B cell (primary cell): ENCODE measurements at regions of chr10 and their contacts with region 1.

Region 1: GRCh38 chr10:35195361-35196306 is 69.0 kb downstream of the CREM start:
- DNase-seq: peak; percentile 96
- ATAC-seq: peak; percentile 87
- H3K4me3 ChIP-seq: peak overlapping the region; percentile 38 to 68 (median 60)
- H3K4me3 Mint-ChIP-seq: peak overlapping the region; percentile 93
- H3K27ac ChIP-seq: peak overlapping the region; percentile 94 to 98
- H3K27ac Mint-ChIP-seq: peak overlapping the region; percentile 98
- H3K4me1 ChIP-seq: peaks cover 7 to 12% of the 10 kb centered on the region in 2 donors
- H3K4me1 Mint-ChIP-seq: peaks cover 32% of the 10 kb centered on the region
- H3K27me3 ChIP-seq: no peaks in the 10 kb centered on the region
- H3K27me3 Mint-ChIP-seq: no peaks in the 10 kb centered on the region
- CTCF ChIP-seq: peak; percentile 83

Region 2: GRCh38 chr10:35090162-35090954 is 105.3 kb before region 1 on chr10 and contains the start of gene CUL2:
- CTCF ChIA-PET with region 1: interaction called, 11 read pairs
- POLR2A ChIA-PET with region 1: interaction called, 4 read pairs
- intact Hi-C with region 1: loop called (anchors 1 kb)
- DNase-seq: peak; percentile 98
- ATAC-seq: peak; percentile 95
- H3K4me3 ChIP-seq: peak within 1 kb of the TSS; percentile 62 to 92 (median 80)
- H3K4me3 Mint-ChIP-seq: peak within 1 kb of the TSS; percentile 89
- H3K27ac ChIP-seq: peak within 1 kb of the TSS; percentile 95 to 98
- H3K27ac Mint-ChIP-seq: peak within 1 kb of the TSS; percentile 95
- H3K4me1 ChIP-seq: peaks cover 29 to 31% of the 10 kb centered on the region in 2 donors
- H3K4me1 Mint-ChIP-seq: peaks cover 50% of the 10 kb centered on the region
- H3K27me3 ChIP-seq: no peaks in the 10 kb centered on the region
- H3K27me3 Mint-ChIP-seq: no peaks in the 10 kb centered on the region
- CTCF ChIP-seq: no peak
- total RNA-seq, gene CUL2: 36.9 and 41.9 TPM in 2 replicates

Region 3: GRCh38 chr10:35126530-35127296 is 68.9 kb before region 1 on chr10 and contains the start of gene CREM:
- CTCF ChIA-PET with region 1: interaction called, 156 read pairs
- POLR2A ChIA-PET with region 1: interaction called, 42 read pairs
- intact Hi-C with region 1: loop called (anchors 1 kb)
- DNase-seq: peak; percentile 99
- ATAC-seq: peak; percentile 84
- H3K4me3 ChIP-seq: peak within 1 kb of the TSS; percentile 43 to 99 (median 93)
- H3K4me3 Mint-ChIP-seq: peak within 1 kb of the TSS; percentile 81
- H3K27ac ChIP-seq: peak within 1 kb of the TSS; percentile 94 to 100
- H3K27ac Mint-ChIP-seq: peak within 1 kb of the TSS; percentile 100
- H3K4me1 ChIP-seq: peaks cover 8 to 17% of the 10 kb centered on the region in 2 donors
- H3K4me1 Mint-ChIP-seq: peaks cover 37% of the 10 kb centered on the region
- H3K27me3 ChIP-seq: no peaks in the 10 kb centered on the region
- H3K27me3 Mint-ChIP-seq: no peaks in the 10 kb centered on the region
- CTCF ChIP-seq: peak; percentile 80
- total RNA-seq, gene CREM: 94.6 and 97.4 TPM in 2 replicates

Region 4: GRCh38 chr10:35153716-35154479 is 41.7 kb before region 1 on chr10:
- CTCF ChIA-PET with region 1: interaction called, 35 read pairs
- POLR2A ChIA-PET with region 1: interaction called, 6 read pairs
- intact Hi-C with region 1: loop called (anchors 1 kb)
- DNase-seq: no peak
- ATAC-seq: no peak
- H3K4me3 ChIP-seq: no peak overlapping the region
- H3K4me3 Mint-ChIP-seq: no peak overlapping the region
- H3K27ac ChIP-seq: no peak overlapping the region
- H3K27ac Mint-ChIP-seq: no peak overlapping the region
- H3K4me1 ChIP-seq: peaks cover 20 to 22% of the 10 kb centered on the region in 2 donors
- H3K4me1 Mint-ChIP-seq: peaks cover 26% of the 10 kb centered on the region
- H3K27me3 ChIP-seq: no peaks in the 10 kb centered on the region
- H3K27me3 Mint-ChIP-seq: no peaks in the 10 kb centered on the region
- CTCF ChIP-seq: no peak

Region 5: DNA sequence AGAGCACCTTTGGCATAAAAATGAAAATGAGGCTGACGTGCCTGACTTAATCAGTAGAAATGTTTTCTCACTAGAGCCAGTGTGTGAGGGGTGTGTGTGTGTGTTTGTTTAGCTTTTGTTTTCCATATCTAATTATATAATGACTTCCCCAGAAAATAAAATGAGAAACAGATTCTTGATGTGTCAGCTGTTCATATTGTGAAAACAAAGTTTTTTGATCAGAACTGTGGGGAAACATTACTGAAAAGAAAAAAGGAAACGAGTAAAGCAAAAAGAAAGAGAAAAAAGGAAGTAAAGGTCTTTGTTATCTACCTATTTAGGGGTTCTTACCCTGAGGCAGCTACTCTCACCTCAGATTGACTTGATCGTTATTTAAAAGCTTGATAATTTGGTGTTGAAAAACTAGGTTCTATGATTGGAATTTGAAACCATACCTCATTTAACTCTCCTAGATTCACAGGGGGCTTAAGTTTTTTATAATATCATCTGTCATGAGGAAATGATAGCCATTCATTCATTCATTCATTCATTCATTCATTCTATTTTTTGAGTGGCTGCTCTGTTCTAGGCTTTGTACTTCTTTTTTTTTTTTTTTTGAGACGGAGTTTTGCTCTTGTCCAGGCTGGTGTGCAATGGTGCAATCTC is 11.0 kb before region 1 on chr10:
- CTCF ChIA-PET with region 1: interaction called, 22 read pairs
- POLR2A ChIA-PET with region 1: interaction called, 5 read pairs
- intact Hi-C with region 1: loop called (anchors 1 kb)
- DNase-seq: peak; percentile 65
- ATAC-seq: peak; percentile 54
- H3K4me3 ChIP-seq: peak overlapping the region in 1 of 5 experiments; percentile 10
- H3K4me3 Mint-ChIP-seq: peak overlapping the region; percentile 23
- H3K27ac ChIP-seq: peak overlapping the region; percentile 60 to 84
- H3K27ac Mint-ChIP-seq: peak overlapping the region; percentile 47
- H3K4me1 ChIP-seq: peaks cover 13 to 17% of the 10 kb centered on the region in 2 donors
- H3K4me1 Mint-ChIP-seq: peaks cover 18% of the 10 kb centered on the region
- H3K27me3 ChIP-seq: no peaks in the 10 kb centered on the region
- H3K27me3 Mint-ChIP-seq: no peaks in the 10 kb centered on the region
- CTCF ChIP-seq: no peak

Region 6: DNA sequence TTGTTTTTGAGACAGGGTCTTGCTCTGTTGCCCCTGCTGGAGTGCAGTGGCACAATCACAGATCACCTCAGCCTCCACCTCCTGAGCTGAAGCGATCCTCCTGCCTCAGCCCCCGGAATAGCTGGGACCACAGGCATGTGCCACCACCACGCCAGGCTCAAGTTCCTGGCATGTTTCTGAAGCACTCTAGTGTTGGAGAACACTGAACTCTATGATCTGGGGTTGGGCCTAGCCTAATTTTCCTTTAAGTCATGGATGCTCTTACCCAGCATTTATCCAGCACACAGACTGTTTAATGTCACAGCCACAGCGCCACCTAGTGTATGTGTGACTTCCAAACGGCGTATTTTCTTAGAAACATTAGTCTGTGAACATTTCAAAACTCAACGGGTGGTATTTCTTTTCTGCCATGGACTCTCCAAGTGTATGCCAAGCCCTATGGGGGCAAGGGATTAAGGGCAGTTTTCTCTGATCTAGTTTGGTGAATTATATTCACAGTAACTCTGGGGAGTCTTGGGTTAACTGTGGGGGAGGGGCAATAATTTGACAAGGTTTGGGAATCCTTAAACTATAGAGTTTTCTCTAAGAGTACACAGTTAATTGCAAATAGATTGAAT is 22.8 kb after region 1 on chr10:
- CTCF ChIA-PET with region 1: interaction called, 41 read pairs
- POLR2A ChIA-PET with region 1: no interaction called
- intact Hi-C with region 1: loop called (anchors 1 kb)
- DNase-seq: peak; percentile 87
- ATAC-seq: peak; percentile 78
- H3K4me3 ChIP-seq: no peak overlapping the region
- H3K4me3 Mint-ChIP-seq: no peak overlapping the region
- H3K27ac ChIP-seq: no peak overlapping the region
- H3K27ac Mint-ChIP-seq: no peak overlapping the region
- H3K4me1 ChIP-seq: no peaks in the 10 kb centered on the region
- H3K4me1 Mint-ChIP-seq: peaks cover 12% of the 10 kb centered on the region
- H3K27me3 ChIP-seq: peaks cover 0 to 2% (median 0%) of the 10 kb centered on the region in 4 experiments
- H3K27me3 Mint-ChIP-seq: peaks cover 12% of the 10 kb centered on the region
- CTCF ChIP-seq: peak; percentile 88

Region 7: DNA sequence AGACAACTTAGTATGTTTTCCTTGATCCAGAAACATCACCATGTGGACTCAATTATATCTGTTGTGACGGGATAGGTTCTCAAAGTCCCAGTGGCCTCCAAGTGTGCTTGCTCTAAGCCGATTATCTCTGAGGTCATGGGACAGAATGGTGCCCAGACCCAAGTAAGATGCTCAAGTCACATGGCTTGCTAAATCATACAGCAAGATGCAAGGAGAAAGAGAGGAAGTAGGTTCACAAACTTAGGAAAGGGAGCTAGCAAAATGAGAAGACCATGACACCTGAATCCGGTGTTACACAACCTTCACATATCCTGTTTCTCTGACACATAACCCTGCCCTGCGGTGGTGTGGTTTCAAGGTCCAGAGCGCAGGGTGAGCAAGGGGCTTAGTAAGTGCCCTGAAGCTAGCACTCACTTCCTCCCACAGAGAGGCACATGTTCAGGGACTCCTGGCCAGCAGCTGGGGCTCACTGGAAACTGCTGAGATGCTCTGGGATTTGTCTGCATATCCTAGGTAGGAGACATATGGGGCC is 1338.9 kb after region 1 on chr10:
- CTCF ChIA-PET with region 1: no interaction called
- POLR2A ChIA-PET with region 1: no interaction called
- intact Hi-C with region 1: loop called (anchors 5 kb)
- DNase-seq: peak; percentile 89
- ATAC-seq: peak; percentile 99
- H3K4me3 ChIP-seq: no peak overlapping the region
- H3K4me3 Mint-ChIP-seq: peak overlapping the region; percentile 40
- H3K27ac ChIP-seq: peak overlapping the region in 1 of 2 donors; percentile 32
- H3K27ac Mint-ChIP-seq: peak overlapping the region; percentile 78
- H3K4me1 ChIP-seq: peaks cover 29 to 35% of the 10 kb centered on the region in 2 donors
- H3K4me1 Mint-ChIP-seq: peaks cover 32% of the 10 kb centered on the region
- H3K27me3 ChIP-seq: no peaks in the 10 kb centered on the region
- H3K27me3 Mint-ChIP-seq: no peaks in the 10 kb centered on the region
- CTCF ChIP-seq: no peak